WTC11 (cell line): ENCODE measurements at regions of chr2 and their contacts with region 1.

Region 1: DNA sequence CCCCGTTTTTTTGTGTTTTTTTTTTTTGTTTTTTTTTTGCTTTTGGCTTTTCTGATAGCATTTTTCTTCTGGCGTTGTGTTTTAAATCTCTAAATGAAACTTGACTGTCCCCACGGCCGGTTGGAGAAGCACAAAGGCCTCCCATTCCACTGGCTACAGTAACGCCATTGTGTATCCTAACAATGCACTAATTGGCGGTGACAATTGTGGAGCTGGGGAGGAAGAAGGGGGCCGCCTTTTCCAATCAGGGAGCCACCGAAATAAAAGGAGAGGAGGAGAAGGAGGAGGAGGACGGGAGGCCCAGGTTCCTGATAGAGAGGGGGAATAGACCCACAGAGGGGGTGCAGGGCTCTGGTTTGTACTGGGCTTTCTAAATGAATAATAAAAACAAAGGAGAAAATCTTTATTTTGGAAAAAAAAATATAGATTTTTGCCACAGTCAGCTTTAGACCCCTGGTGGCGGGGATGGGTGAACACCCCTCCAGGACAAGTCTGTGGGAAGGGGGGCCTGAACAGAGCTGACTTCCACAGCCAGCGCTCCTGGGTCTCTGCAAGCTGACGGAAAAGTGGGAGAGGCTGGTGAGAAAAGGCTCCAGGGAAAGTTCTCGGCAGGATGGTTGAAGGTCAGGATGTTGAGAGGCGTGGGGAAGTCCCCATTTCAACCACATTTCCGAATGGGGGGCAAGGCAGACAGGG is 43.7 kb upstream of the FZD5 start:
- DNase-seq: peak; percentile 23
- ATAC-seq: peak; percentile 3; the same call in 1 of the 2 replicates
- H3K4me3 Mint-ChIP-seq: peak overlapping the region; percentile 42
- H3K27ac Mint-ChIP-seq: peak overlapping the region; percentile 93
- H3K4me1 Mint-ChIP-seq: peaks cover 62% of the 10 kb centered on the region
- H3K27me3 Mint-ChIP-seq: no peaks in the 10 kb centered on the region
- CTCF ChIP-seq: no peak

Region 2: DNA sequence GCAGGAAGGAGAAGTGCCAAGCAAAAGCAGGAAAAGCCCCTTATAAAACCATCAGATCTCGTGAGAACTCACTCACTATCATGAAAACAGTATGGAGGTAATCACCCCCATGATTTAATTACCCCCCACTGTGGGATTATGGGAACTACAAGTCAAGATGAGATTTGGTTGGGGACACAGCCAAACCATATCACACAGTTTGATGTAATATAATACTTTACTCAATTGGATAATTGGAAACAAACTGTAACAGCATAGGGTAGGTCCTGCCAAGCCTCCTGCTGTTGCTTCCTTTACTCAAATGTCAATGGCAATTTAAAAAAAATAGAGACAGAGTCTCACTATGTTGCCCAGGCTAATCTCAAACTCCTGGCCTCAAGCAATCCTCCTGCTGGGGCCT is 172.7 kb before region 1 on chr2:
- CTCF ChIA-PET with region 1: no interaction called
- POLR2A ChIA-PET with region 1: no interaction called
- DNase-seq: no peak
- ATAC-seq: no peak
- H3K4me3 Mint-ChIP-seq: no peak overlapping the region
- H3K27ac Mint-ChIP-seq: no peak overlapping the region
- H3K4me1 Mint-ChIP-seq: no peaks in the 10 kb centered on the region
- H3K27me3 Mint-ChIP-seq: no peaks in the 10 kb centered on the region; the same call in 1 of the 2 replicates
- CTCF ChIP-seq: no peak

Region 3: DNA sequence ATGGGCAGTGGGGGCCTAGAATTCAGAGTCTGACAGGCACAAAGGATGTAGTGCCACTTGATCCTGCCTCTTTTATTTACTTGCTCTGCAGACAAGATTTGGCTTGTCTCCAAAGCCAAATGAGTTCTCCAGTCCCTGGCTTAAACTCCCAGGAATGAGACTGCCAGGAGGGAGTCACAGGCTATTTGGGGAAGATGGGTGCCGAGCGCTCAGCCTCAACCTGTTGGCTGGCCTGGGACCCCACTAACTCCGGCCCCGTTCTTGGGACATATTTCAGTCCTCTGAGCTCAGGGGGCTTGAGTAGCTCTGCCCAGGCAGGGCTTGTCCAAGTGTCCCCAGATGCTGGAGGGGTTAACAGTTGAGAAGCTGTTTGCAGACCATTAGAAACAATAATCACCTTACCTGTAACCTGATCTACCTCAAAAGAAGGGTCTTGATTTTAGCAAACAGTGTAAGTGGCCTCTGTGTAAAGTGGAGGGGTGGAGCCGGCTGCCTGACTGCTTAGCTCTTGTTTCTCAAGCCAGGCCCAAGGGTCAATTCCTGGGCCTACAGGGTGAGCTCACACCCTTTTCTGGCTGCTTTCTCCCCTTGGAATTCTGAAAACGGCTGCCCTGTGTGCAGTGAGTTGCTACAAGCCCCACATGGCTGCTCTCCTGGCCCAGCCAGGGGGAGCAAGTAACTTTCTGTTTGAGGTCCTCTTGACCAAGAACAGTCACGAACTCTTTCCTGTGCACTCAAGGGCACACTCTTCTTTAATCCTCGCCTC is 16.6 kb before region 1 on chr2:
- CTCF ChIA-PET with region 1: interaction called, 18 read pairs
- POLR2A ChIA-PET with region 1: interaction called, 4 read pairs
- DNase-seq: peak; percentile 53
- ATAC-seq: peak; percentile 89
- H3K4me3 Mint-ChIP-seq: no peak overlapping the region
- H3K27ac Mint-ChIP-seq: peak overlapping the region; percentile 98
- H3K4me1 Mint-ChIP-seq: peaks cover 37% of the 10 kb centered on the region
- H3K27me3 Mint-ChIP-seq: peaks cover 3% of the 10 kb centered on the region; the same call in 1 of the 2 replicates
- CTCF ChIP-seq: no peak